ENCODE measurements at regions of chr3 and their contacts with region 1.

Region 1: DNA sequence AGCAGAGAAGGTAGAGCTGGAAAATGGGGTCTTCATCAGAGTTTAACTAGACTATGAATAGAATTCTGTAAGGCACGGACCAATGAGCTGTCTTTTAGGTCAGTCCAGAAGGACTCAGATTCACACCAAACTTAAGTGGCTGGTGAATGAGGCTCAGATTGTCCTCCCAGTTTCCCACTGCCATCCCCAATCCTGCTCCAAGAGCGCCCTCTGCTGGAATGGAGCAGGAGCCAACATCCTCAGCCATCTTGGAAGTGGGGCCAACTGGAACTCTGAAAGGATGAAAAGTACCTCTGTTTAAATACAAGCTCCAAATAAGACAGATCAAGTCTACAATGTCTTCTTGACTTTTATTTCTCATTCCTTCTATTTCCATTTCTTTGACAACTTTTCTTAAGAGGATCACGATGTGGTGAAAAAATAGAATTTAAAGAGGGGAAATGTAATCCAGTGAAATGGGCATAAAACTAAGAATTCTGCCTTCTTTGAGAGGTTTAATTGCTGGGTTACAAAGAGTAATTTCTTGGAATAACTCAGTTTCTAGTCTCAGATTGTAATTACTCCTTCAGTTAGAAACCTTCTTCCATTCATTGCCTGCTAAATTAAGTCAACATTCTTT is 217.1 kb upstream of the TPRG1 start:
- DNase-seq: peak; percentile 87 to 96 (median 89)
- H3K4me3 ChIP-seq: no peak overlapping the region
- H3K27ac ChIP-seq: no peak overlapping the region
- H3K4me1 ChIP-seq: peaks cover 0 to 3% (median 1%) of the 10 kb centered on the region in 3 donors
- H3K27me3 ChIP-seq: no peaks in the 10 kb centered on the region
- CTCF ChIP-seq: peak; percentile 98

Region 2: DNA sequence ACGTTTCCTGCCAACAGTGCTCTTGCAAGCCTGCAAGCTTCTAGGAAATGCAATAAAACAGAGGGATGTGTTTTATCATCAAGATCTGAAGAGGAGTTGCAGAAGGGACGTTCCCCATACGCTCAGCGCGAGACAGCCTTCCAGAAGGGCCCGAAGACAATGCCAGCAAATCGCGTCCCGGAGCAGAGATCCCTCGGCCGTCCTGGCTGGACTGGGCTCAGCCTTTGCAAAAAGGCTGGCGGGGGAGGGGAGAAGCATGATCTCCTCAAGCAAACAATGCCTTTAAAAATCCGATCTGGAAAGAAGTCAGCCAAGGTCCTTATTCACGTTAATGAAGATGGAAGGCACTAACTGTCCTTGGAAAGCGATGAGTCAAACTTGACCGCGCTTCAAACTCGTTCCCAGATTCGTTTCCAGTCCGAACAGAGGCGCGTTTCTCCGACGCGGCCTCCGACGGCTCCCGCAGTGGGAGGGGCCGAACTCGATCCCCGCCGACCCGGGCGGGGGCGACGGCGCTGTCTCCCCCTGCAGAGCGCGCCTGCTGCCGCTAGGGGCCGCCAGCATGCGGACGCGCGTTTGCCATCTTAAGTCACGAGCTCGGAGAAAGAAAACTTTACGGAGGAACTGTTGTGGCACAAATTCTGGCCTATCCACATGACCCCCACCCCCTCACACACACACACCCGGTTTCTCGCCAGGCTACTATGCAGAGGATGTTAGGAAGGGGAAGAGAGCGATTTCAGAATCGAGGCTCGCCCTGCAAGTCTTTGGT is 1215.0 kb before region 1 on chr3:
- intact Hi-C with region 1: loop called (anchors 5 kb)
- DNase-seq: peak; percentile 91 to 96 (median 94)
- H3K4me3 ChIP-seq: peak overlapping the region; percentile 73 to 91 (median 83)
- H3K27ac ChIP-seq: peak overlapping the region; percentile 94 to 97
- H3K4me1 ChIP-seq: peaks cover 0 to 20% (median 11%) of the 10 kb centered on the region in 3 donors
- H3K27me3 ChIP-seq: no peaks in the 10 kb centered on the region
- CTCF ChIP-seq: peak; percentile 96

Region 3: DNA sequence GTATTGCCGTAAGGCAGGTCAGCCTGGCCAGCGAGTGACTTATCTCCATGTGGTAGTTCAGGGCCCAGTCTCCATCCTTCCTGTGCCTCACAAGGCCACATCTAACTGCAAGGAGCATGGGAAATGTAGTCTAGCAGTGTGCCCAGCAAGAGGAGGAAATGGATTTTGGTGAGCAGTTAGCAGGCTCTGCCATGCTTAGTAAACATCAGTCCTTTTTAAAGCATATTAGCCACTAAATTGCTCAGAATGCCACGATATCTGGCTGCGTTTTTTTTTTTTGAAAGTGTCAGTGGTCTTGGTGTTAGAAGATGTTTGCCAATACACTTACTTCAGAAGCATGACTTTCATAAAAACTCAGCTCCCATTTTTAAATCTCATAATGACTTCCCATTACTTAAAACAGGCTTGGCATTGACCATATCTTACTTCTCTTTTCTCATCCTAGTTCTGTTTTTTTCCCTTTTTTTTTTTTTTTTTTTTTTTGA is 253.2 kb before region 1 on chr3:
- intact Hi-C with region 1: no loop called
- DNase-seq: no peak
- H3K4me3 ChIP-seq: no peak overlapping the region
- H3K27ac ChIP-seq: no peak overlapping the region
- H3K4me1 ChIP-seq: no peaks in the 10 kb centered on the region
- H3K27me3 ChIP-seq: no peaks in the 10 kb centered on the region
- CTCF ChIP-seq: no peak